ENCODE measurements at regions of chr2 and their contacts with region 1.

Region 1: GRCh38 chr2:77521931-77522470 is at the start of gene LRRTM4:
- DNase-seq: no peak
- total RNA-seq, gene LRRTM4: 1.3 TPM

Region 2: GRCh38 chr2:76953733-76954347 is 568.2 kb before region 1 on chr2:
- intact Hi-C with region 1: loop called (anchors 5 kb)
- DNase-seq: no peak

Region 3: DNA sequence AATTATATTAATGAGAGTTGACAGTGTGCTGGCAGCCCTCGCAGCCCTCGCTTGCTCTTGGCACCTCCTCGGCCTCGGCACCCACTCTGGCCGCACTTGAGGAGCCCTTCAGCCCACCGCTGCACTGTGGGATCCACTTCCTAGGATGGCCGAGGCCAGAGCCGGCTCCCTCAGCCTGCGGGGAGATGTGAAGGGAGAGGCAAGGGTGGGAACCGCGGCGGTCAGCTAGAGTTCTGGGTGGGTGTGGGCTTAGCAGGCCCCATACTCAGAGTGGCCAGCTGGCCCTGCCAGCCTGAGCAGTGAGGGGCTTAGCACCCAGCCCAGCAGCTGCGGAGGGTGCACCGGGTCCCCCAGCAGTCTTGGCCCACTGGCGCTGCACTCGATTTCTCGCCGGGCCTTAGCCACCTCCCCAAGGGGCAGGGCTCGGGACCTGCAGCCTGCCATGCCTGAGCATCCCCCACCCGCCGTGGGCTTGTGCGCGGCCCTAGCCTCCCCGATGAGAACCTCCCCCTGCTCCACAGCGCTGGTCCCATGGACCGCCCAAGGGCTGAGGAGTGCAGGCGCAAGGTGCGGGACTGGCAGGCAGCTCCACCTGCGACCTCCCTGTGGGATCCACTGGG is 68.4 kb after region 1 on chr2:
- intact Hi-C with region 1: no loop called
- DNase-seq: no peak

Region 4: GRCh38 chr2:77995161-77995560 is 473.2 kb after region 1 on chr2:
- intact Hi-C with region 1: no loop called
- DNase-seq: no peak

Measured in cardiac septum (tissue), 1 donor.